Activated B cell treated with CpG ODN at 0.5 μM for 24 hours (primary cell): ENCODE measurements at regions of chr12 and their contacts with region 1.

Region 1: GRCh38 chr12:57751788-57752667 is at the start of gene CDK4:
- DNase-seq: peak; percentile 94
- ATAC-seq: peak; percentile 76
- H3K4me3 Mint-ChIP-seq: peak within 1 kb of the TSS; percentile 90
- H3K27ac Mint-ChIP-seq: peak within 1 kb of the TSS; percentile 87
- H3K4me1 Mint-ChIP-seq: peaks cover 55% of the 10 kb centered on the region
- H3K27me3 Mint-ChIP-seq: no peaks in the 10 kb centered on the region
- CTCF ChIP-seq: no peak
- total RNA-seq, gene CDK4: 95.7 and 95.9 TPM in 2 replicates

Region 2: DNA sequence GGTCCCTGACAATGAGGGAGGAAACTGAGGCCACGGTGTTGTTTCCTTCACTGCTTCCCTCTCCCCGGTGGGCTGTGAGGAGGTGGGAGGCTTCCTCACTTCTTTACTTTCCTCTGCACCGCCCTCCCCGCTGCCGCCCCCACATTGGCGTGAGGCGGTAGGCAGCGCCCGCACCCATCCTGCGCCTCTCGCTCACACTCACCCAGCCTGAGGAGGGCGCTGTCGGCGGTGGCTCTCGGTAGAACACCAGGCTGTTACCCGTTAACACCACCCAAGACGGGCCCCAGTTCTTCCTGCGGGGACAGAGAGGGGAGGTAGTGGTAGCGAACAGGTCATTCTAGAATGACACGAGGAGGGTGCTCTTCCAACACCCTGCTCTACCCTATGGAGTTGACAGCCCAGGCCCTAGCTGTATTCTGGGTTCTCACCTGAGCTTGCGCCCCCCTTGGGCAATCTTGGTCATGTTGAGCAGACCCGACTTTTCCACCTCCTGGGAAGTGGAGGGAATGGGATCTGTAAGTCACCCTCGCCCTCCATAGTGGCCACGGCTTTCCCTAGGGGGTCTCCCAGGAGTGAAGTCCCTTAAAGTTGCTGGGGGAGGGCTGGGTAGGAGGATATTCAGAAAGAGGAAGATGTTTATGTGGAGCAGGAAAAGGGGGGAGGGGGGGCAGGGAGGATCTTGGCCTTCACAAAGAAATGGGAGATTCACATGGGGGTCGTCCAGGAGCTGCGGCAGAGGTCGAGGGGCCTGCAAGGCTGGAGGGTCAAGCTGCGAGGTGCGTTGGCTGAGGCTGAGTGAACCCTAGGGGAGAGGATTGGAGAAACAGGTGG is 275.7 kb before region 1 on chr12:
- CTCF ChIA-PET with region 1: no interaction called
- POLR2A ChIA-PET with region 1: no interaction called
- intact Hi-C with region 1: loop called (anchors 5 kb)
- DNase-seq: peak; percentile 54
- ATAC-seq: peak; percentile 38
- H3K4me3 Mint-ChIP-seq: peak overlapping the region; percentile 93
- H3K27ac Mint-ChIP-seq: peak overlapping the region; percentile 100
- H3K4me1 Mint-ChIP-seq: peaks cover 80% of the 10 kb centered on the region
- H3K27me3 Mint-ChIP-seq: no peaks in the 10 kb centered on the region
- CTCF ChIP-seq: no peak

Region 3: GRCh38 chr12:57765042-57765697 is 13.1 kb after region 1 on chr12:
- CTCF ChIA-PET with region 1: interaction called, 20 read pairs
- POLR2A ChIA-PET with region 1: interaction called, 34 read pairs
- intact Hi-C with region 1: loop called (anchors 1 kb)
- DNase-seq: peak; percentile 47
- ATAC-seq: peak; percentile 83
- H3K4me3 Mint-ChIP-seq: peak overlapping the region; percentile 89
- H3K27ac Mint-ChIP-seq: no peak overlapping the region
- H3K4me1 Mint-ChIP-seq: peaks cover 32% of the 10 kb centered on the region
- H3K27me3 Mint-ChIP-seq: peaks cover 13% of the 10 kb centered on the region
- CTCF ChIP-seq: no peak

Region 4: GRCh38 chr12:57782608-57783465 is 30.8 kb after region 1 on chr12 and contains the start of gene TSFM:
- CTCF ChIA-PET with region 1: interaction called, 16 read pairs
- POLR2A ChIA-PET with region 1: interaction called, 11 read pairs
- intact Hi-C with region 1: loop called (anchors 1 kb)
- DNase-seq: peak; percentile 93
- ATAC-seq: peak; percentile 97
- H3K4me3 Mint-ChIP-seq: peak within 1 kb of the TSS; percentile 99
- H3K27ac Mint-ChIP-seq: peak within 1 kb of the TSS; percentile 97
- H3K4me1 Mint-ChIP-seq: peaks cover 22% of the 10 kb centered on the region
- H3K27me3 Mint-ChIP-seq: no peaks in the 10 kb centered on the region
- CTCF ChIP-seq: no peak
- total RNA-seq, gene TSFM: 28.4 and 33.4 TPM in 2 replicates

Region 5: DNA sequence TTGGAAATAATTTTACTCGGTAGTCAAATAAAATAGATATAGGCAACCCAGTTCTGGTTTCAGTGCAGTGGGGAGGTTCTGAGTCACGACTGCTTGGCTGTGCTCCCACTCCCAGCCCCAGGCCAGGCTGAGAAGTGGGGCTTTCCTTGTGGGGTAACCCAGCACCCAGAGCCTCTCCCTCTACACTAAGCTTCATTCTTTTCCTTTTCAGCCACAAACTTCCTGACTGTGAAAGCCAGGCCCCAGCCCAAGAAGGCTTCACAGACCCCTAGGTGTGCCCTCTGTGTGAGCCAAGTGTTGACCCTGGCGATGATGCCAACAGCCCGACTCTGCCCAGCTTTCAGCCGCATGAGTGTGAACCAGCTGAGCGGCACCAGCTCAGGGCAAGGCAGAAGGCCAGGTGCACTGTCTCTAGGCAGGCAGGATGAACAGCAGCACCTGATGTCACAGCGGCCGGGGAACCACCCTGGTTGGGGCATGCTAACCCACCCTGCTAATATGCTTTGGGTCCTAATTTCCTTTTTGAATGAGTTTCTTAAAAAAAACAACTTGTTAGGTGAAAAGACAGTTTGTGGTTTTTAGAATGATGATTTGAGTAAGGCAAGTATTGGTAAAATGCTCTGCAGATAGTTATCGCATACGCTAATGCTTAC is 147.1 kb after region 1 on chr12:
- CTCF ChIA-PET with region 1: interaction called, 5 read pairs
- POLR2A ChIA-PET with region 1: interaction called, 10 read pairs
- intact Hi-C with region 1: loop called (anchors 1 kb)
- DNase-seq: peak; percentile 70
- ATAC-seq: peak; percentile 83
- H3K4me3 Mint-ChIP-seq: peak overlapping the region; percentile 80
- H3K27ac Mint-ChIP-seq: peak overlapping the region; percentile 100
- H3K4me1 Mint-ChIP-seq: peaks cover 62% of the 10 kb centered on the region
- H3K27me3 Mint-ChIP-seq: no peaks in the 10 kb centered on the region
- CTCF ChIP-seq: no peak